ENCODE measurements at regions of chr9 and their contacts with region 1.

Region 1: GRCh38 chr9:69452110-69452782 is 127.2 kb downstream of the ENTREP1 start:
- DNase-seq: no peak
- H3K4me3 ChIP-seq: no peak overlapping the region
- H3K27ac ChIP-seq: no peak overlapping the region
- H3K4me1 ChIP-seq: no peaks in the 10 kb centered on the region
- H3K27me3 ChIP-seq: no peaks in the 10 kb centered on the region
- CTCF ChIP-seq: no peak
- EP300 ChIP-seq: no peak
- POLR2A ChIP-seq: no peak

Region 2: DNA sequence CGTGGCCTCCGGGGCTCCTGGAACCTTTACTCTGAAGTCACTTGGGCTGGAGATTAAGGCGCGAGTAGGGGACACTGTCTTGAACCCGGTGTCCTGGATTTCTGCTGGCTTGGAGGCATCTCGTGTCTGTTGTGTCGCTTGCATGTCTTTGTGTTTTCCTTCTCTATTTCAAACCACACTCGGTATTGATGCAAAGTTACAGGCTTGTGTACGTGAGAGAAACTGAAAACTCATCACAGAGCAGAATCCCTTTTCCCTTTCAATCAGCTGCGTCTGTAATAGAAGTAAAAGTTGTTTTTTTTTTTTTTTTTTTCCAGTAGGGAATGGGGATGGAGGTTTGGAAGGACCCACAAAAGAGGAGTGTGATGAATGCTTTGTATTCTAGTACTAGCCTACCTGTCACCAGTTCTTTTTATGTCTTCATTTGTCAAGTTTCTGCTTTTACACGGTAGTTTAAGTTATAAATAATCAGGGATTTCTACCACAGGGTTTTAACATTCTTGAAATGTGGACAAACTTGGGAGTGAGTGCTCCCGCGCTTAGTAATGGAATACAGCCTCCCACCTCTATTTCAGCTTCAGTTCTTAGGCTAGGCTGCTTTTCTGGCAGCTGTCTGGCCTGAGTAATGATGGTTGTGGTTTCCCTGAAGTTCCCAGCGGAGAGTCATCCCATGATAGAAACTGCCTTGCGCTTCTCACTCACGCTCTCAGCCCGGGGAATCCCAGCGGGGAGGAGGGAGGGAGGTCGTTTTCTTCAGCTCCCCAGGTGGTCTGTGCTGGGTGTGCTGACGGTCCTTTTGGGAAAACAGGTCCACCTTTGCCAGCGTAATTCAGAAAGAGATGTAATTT is 277.4 kb before region 1 on chr9:
- in situ Hi-C with region 1: no loop called
- intact Hi-C with region 1: no loop called
- DNase-seq: peak; percentile 21
- H3K4me3 ChIP-seq: peak overlapping the region; percentile 38 to 57 (median 44)
- H3K27ac ChIP-seq: peak overlapping the region; percentile 44 to 79 (median 66)
- H3K4me1 ChIP-seq: peaks cover 0 to 40% (median 20%) of the 10 kb centered on the region in 4 donors
- H3K27me3 ChIP-seq: no peaks in the 10 kb centered on the region
- CTCF ChIP-seq: no peak
- EP300 ChIP-seq: no peak
- POLR2A ChIP-seq: no peak

Region 3: DNA sequence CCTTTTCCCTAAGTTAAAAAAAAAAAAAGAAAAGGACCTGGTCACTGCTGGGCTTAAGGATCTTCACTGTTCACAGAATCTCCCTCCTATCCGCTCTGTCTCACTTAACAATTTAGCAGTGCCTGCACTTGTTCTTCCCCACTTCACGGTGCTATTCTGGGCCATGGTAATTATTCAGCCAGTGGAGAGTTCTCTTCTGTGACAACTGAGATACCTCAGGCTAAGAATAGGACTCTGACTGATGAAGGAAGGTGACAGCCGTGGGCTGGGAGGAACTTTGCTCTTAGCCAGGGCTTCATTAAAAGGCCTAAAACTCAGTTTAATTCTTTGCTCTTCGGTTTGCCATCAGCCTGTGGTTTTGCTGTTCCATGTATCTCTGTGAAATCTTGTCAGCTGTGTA is 179.1 kb before region 1 on chr9:
- in situ Hi-C with region 1: no loop called
- intact Hi-C with region 1: no loop called
- DNase-seq: no peak
- H3K4me3 ChIP-seq: no peak overlapping the region
- H3K27ac ChIP-seq: no peak overlapping the region
- H3K4me1 ChIP-seq: no peaks in the 10 kb centered on the region
- H3K27me3 ChIP-seq: no peaks in the 10 kb centered on the region
- CTCF ChIP-seq: no peak
- EP300 ChIP-seq: no peak
- POLR2A ChIP-seq: no peak

Region 4: GRCh38 chr9:69376651-69377050 is 75.6 kb before region 1 on chr9:
- in situ Hi-C with region 1: no loop called
- intact Hi-C with region 1: no loop called
- DNase-seq: no peak
- H3K4me3 ChIP-seq: no peak overlapping the region
- H3K27ac ChIP-seq: peak overlapping the region in 1 of 4 donors; percentile 19
- H3K4me1 ChIP-seq: no peaks in the 10 kb centered on the region
- H3K27me3 ChIP-seq: no peaks in the 10 kb centered on the region
- CTCF ChIP-seq: no peak
- EP300 ChIP-seq: no peak
- POLR2A ChIP-seq: no peak

Region 5: DNA sequence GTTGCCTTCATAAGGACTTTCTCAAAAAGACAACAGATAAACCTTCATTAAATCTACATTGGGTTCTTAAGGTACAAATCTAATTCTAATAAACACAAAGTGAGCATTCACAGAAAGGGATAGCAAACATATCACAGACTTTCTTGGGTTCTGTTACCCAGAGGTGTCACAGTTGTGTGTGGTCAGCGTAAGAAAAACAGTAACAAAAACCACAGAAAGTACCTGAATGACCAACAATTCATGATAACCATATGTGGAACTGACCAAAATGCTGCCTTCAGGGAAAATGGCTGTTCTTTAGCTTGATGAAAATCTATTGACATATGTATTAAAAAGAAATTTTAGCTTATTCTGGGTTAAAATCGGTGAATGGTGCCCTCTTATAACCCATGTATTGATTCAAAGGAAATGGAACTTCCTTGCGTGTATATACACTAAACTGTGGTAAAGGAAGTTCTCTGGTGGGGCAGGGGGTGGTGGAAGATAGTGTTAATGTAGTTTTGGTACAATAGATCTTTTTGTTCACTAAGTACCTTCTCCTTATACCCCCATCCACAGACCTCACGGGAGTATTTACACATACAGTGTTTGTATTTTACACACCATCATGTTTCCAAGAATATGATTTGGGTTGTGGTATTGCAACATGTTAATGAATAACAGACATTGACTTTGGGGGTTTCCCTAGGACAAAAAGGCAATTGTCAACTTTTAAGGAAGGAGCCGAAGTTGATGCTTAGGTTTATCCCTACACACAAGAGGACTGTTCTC is 67.4 kb after region 1 on chr9:
- in situ Hi-C with region 1: loop called in 1 of 4 experiments (anchors 10 kb)
- intact Hi-C with region 1: no loop called
- DNase-seq: no peak
- H3K4me3 ChIP-seq: no peak overlapping the region
- H3K27ac ChIP-seq: no peak overlapping the region
- H3K4me1 ChIP-seq: no peaks in the 10 kb centered on the region
- H3K27me3 ChIP-seq: no peaks in the 10 kb centered on the region
- CTCF ChIP-seq: no peak
- EP300 ChIP-seq: no peak
- POLR2A ChIP-seq: no peak

Region 6: DNA sequence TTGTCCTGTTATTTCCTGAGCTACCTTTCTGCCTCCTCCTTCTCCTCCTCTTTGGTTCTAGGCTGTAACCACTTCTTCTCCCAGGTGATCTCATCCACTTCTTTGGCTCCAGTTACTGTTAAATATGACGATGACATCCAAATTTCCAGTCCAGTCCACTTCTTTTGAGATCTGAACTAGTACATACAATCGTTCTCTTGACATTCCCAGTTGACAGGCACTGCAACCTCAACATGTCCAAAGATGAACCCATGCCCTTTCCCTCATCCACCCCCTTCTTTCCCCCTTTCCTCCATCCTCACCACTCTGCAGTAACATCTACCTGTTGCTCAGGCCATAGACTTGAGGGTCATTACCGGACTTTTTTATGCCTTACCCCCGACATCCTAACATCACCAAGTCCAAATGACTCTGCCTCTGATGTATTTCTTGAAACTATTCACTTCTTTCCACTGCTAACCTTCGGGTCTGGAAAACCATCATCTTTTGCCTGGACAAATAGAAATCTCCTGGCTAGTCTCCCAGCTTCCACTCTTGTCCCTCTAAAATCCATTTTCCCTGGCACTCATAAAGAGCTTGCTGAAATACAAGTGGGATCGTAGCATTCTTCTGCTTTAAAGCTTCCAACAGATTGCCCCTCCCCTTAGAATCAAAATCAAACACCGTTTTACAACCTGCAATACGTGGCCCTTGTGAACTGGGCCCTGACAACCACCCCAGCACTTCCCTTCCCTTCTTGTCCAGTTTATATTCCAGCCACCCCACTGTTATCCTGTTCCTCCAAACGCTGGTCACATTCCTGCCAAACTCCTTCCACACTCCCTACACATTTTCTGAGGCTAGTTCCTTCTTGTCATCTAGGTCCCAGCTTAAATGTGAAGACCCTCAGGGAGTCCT is 930.7 kb after region 1 on chr9:
- in situ Hi-C with region 1: no loop called
- intact Hi-C with region 1: no loop called
- DNase-seq: no peak
- H3K4me3 ChIP-seq: no peak overlapping the region
- H3K27ac ChIP-seq: no peak overlapping the region
- H3K4me1 ChIP-seq: peaks cover 0 to 31% (median 4%) of the 10 kb centered on the region in 4 donors
- H3K27me3 ChIP-seq: no peaks in the 10 kb centered on the region
- CTCF ChIP-seq: no peak
- EP300 ChIP-seq: no peak
- POLR2A ChIP-seq: no peak

Measured in transverse colon (tissue), 4 donors.